ENCODE measurements at regions of chr11 and their contacts with region 1.

Region 1: GRCh38 chr11:15113381-15113780 is 1.3 kb upstream of the INSC start:
- DNase-seq: peak; percentile 14
- H3K4me3 Mint-ChIP-seq: no peak overlapping the region
- H3K27ac Mint-ChIP-seq: no peak overlapping the region
- H3K4me1 Mint-ChIP-seq: peaks cover 25% of the 10 kb centered on the region
- H3K27me3 Mint-ChIP-seq: peaks cover 31% of the 10 kb centered on the region

Region 2: DNA sequence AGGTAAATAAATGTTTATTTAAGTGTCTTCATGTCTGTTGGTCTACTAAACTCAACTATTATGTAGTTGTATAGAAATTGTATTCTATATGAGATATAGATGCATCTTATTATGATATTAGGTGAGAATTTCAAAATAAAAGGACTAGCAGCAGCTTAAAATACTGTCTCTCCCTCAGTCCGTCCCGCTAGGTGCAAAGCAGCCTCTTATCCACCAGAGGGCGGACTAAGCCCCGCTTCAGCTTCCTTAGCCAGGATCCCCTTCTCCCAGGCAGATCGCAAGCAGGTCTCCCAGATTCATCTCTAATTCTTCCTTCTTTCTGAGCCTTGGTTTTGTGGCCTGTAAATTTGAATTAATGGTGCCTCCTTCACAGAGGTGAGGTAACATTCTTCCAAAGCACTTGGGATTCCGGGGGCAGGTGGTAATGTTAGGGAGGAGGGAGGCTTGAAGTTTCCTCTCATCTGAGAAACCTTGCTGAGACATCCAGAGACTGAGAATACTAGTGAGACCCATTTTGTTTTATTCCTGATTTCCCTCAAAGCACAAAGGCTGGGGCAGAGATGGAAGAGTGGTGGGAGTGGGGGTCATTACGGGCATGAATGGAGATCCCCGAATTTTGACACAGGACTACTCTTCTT is 12.2 kb before region 1 on chr11:
- CTCF ChIA-PET with region 1: interaction called, 13 read pairs
- POLR2A ChIA-PET with region 1: no interaction called
- DNase-seq: peak; percentile 56
- H3K4me3 Mint-ChIP-seq: no peak overlapping the region
- H3K27ac Mint-ChIP-seq: no peak overlapping the region
- H3K4me1 Mint-ChIP-seq: no peaks in the 10 kb centered on the region
- H3K27me3 Mint-ChIP-seq: peaks cover 17% of the 10 kb centered on the region

Region 3: GRCh38 chr11:15127341-15127740 is 14.0 kb after region 1 on chr11:
- CTCF ChIA-PET with region 1: interaction called, 11 read pairs
- POLR2A ChIA-PET with region 1: no interaction called
- DNase-seq: no peak
- H3K4me3 Mint-ChIP-seq: no peak overlapping the region
- H3K27ac Mint-ChIP-seq: no peak overlapping the region
- H3K4me1 Mint-ChIP-seq: no peaks in the 10 kb centered on the region
- H3K27me3 Mint-ChIP-seq: peaks cover 33% of the 10 kb centered on the region

Region 4: GRCh38 chr11:15159085-15159484 is 45.7 kb after region 1 on chr11:
- CTCF ChIA-PET with region 1: interaction called, 3 read pairs
- POLR2A ChIA-PET with region 1: interaction called, 10 read pairs
- DNase-seq: no peak
- H3K4me3 Mint-ChIP-seq: no peak overlapping the region
- H3K27ac Mint-ChIP-seq: no peak overlapping the region
- H3K4me1 Mint-ChIP-seq: no peaks in the 10 kb centered on the region
- H3K27me3 Mint-ChIP-seq: peaks cover 15% of the 10 kb centered on the region

Measured in activated CD4-positive, alpha-beta T cell treated with anti-CD3 and anti-CD28 coated beads, Interleukin-2, amount 10 ng/mL, durations not matched to agents 7 days and 5 days (primary cell).